SK-N-SH (cell line): ENCODE measurements at regions of chr7 and their contacts with region 1.

Region 1: DNA sequence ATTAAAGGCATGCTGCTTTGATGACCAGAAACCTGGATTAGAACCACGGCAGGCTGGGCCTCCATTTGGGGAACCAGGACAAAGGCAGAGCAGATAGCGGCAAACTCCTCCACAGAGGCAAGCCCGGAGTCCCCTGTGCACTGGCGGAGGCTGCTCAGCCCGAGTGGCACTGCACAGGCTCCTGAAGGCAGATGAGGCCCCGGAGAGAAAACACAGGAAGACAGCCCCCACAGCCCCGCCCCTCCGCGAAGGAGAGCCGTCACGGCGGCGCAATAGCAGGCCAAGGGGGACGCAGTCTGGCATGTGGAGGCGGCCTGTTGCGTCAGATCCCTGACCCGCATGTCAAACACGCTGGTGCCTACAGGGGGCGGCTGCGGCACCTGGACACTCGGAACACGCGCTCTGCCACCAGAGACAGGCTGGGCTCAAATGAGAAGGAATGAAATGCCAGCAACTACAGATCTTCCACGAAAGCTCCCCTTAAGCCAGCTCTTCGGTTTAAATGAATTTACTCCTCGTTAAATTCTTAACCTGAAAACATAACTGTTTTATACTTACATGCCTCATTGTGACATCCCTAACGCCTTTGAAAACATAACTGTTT is 128.5 kb downstream of the MAD1L1 start:
- DNase-seq: peak; percentile 99
- H3K4me3 ChIP-seq: no peak overlapping the region
- H3K27ac ChIP-seq: peak overlapping the region; percentile 32 to 91
- H3K4me1 ChIP-seq: peaks cover 23 to 82% of the 10 kb centered on the region in 2 experiments
- H3K27me3 ChIP-seq: no peaks in the 10 kb centered on the region
- CTCF ChIP-seq: peak; percentile 75
- EP300 ChIP-seq: 0 out of 4 replicates have a peak, but pooled peaks of 1 of the 2 experiments have one; percentile 30
- RAD21 ChIP-seq: peak; percentile 77

Region 2: DNA sequence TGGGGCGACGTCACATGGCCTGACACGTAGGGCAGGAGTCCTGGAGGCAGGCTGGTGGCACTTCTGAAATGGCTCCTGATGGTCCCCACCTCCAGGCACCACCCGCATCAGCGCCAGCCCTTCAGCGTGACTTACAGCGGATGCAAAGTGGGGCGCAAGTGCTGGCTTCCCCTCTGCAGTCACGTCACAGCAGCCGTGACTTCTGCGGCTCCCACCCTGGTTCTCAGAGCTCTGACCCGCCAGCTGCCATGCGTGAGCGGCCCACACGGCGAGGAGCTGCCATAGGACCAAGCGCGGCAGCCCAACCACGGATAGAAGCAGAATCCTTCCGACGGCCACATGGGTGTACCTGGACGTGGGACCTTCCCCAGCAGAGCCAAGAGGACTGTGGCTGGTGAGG is 275.1 kb before region 1 on chr7:
- CTCF ChIA-PET with region 1: no interaction called
- POLR2A ChIA-PET with region 1: no interaction called
- DNase-seq: no peak
- H3K4me3 ChIP-seq: no peak overlapping the region
- H3K27ac ChIP-seq: no peak overlapping the region
- H3K4me1 ChIP-seq: peaks cover 0 to 2% of the 10 kb centered on the region in 2 experiments; a peak in 1 of 4 replicates
- H3K27me3 ChIP-seq: no peaks in the 10 kb centered on the region
- CTCF ChIP-seq: no peak
- EP300 ChIP-seq: no peak
- RAD21 ChIP-seq: no peak

Region 3: GRCh38 chr7:2069472-2069860 is 34.7 kb before region 1 on chr7:
- CTCF ChIA-PET with region 1: interaction called, 10 read pairs
- POLR2A ChIA-PET with region 1: no interaction called
- DNase-seq: no peak
- H3K4me3 ChIP-seq: no peak overlapping the region
- H3K27ac ChIP-seq: no peak overlapping the region
- H3K4me1 ChIP-seq: peaks cover 0 to 25% of the 10 kb centered on the region in 2 experiments; a peak in 2 of 4 replicates
- H3K27me3 ChIP-seq: no peaks in the 10 kb centered on the region
- CTCF ChIP-seq: no peak
- EP300 ChIP-seq: no peak
- RAD21 ChIP-seq: no peak

Region 4: DNA sequence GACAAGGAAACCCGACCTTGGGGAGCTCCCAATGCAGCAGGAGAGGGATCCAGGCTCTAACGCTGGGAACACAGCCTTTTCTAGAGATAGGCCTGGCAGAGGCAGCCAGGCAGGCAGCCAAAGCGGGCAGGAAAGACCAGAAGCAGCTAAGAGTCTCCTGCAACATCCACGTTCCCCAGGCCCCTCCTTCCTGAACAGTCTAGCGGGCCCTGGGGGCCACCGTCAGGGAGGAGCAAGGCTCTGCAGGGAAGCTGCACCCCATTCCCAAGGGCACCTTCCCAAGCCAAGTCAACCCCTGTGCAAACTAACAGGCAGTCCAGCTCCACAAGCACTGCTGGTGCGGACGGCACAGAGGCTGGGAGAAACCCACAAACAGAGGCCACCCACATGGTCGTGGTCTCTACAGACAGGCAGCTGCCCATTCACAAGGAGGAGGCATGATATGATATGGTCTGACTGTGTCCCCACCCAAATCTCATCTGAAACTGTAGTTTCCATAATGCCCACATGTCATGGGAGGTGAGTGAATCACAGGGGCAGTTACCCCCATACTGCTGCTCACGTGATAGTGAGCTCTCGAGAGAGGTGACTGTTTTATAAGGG is 12.9 kb after region 1 on chr7:
- CTCF ChIA-PET with region 1: interaction called, 24 read pairs
- POLR2A ChIA-PET with region 1: no interaction called
- DNase-seq: peak; percentile 81
- H3K4me3 ChIP-seq: no peak overlapping the region
- H3K27ac ChIP-seq: peak overlapping the region; percentile 37 to 93; a peak in 3 of 4 replicates
- H3K4me1 ChIP-seq: peaks cover 30 to 73% of the 10 kb centered on the region in 2 experiments; a peak in 3 of 4 replicates
- H3K27me3 ChIP-seq: no peaks in the 10 kb centered on the region
- CTCF ChIP-seq: no peak
- EP300 ChIP-seq: no peak
- RAD21 ChIP-seq: peak; percentile 49